ENCODE measurements at regions of chr5 and their contacts with region 1.

Region 1: GRCh38 chr5:38809388-38810359 is 36.1 kb upstream of the OSMR start:
- DNase-seq: peak; percentile 87
- H3K4me3 ChIP-seq: no peak overlapping the region
- H3K27ac ChIP-seq: no peak overlapping the region
- H3K4me1 ChIP-seq: peaks cover 31% of the 10 kb centered on the region
- H3K27me3 ChIP-seq: no peaks in the 10 kb centered on the region
- CTCF ChIP-seq: peak; percentile 81 to 83
- POLR2A ChIP-seq: no peak

Region 2: DNA sequence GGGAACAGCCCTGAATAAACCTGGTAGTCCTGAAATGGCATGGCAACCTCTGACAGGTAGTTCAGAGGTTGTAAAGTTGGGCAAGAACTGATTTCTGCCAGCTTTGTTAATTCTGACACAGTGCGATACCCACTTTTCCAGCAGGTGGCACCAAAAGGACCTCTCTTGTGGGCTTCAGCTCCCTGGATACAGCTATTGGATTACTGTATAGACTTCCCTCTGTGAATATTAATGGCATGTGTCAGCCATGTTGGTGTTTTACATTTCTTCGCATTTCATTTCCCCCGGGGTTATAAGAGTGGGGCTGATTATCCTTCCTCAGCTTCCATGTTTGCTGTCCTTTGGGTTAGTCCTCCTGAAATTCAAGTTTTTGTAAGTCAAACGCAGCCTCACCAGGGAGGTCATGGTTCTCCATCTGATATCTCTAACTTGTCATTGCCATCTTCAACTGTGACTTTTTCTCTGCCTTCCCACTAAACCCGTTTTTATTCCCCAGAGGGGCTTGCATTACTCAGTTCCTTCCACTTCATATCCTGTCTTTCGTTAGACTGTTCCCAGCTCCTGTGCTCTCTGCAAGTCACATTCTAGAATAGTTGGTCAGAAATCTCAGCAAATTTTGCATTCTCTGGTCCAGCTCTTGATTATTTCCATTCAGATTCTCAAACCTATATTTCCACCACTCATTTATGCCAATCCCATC is 388.8 kb before region 1 on chr5:
- CTCF ChIA-PET with region 1: interaction called, 219 read pairs
- POLR2A ChIA-PET with region 1: interaction called, 3 read pairs
- dilution Hi-C with region 1: loop called (anchors 25 kb)
- intact Hi-C with region 1: loop called (anchors 1 kb)
- DNase-seq: peak; percentile 73
- H3K4me3 ChIP-seq: peak overlapping the region in 1 of 3 experiments; percentile 32
- H3K27ac ChIP-seq: peak overlapping the region; percentile 39
- H3K4me1 ChIP-seq: peaks cover 11% of the 10 kb centered on the region
- H3K27me3 ChIP-seq: no peaks in the 10 kb centered on the region
- CTCF ChIP-seq: peak; percentile 74 to 81
- POLR2A ChIP-seq: no peak

Region 3: GRCh38 chr5:38515646-38516045 is 294.0 kb before region 1 on chr5:
- CTCF ChIA-PET with region 1: interaction called, 12 read pairs
- POLR2A ChIA-PET with region 1: no interaction called
- dilution Hi-C with region 1: no loop called
- intact Hi-C with region 1: no loop called
- DNase-seq: peak; percentile 20
- H3K4me3 ChIP-seq: no peak overlapping the region
- H3K27ac ChIP-seq: no peak overlapping the region
- H3K4me1 ChIP-seq: no peaks in the 10 kb centered on the region
- H3K27me3 ChIP-seq: no peaks in the 10 kb centered on the region
- CTCF ChIP-seq: peak in 1 of 2 donors; percentile 46
- POLR2A ChIP-seq: no peak

Region 4: GRCh38 chr5:38598994-38599611 is 210.6 kb before region 1 on chr5:
- CTCF ChIA-PET with region 1: interaction called, 16 read pairs
- POLR2A ChIA-PET with region 1: no interaction called
- dilution Hi-C with region 1: no loop called
- intact Hi-C with region 1: loop called (anchors 2 kb)
- DNase-seq: peak; percentile 87
- H3K4me3 ChIP-seq: no peak overlapping the region
- H3K27ac ChIP-seq: peak overlapping the region; percentile 66
- H3K4me1 ChIP-seq: peaks cover 59% of the 10 kb centered on the region
- H3K27me3 ChIP-seq: no peaks in the 10 kb centered on the region
- CTCF ChIP-seq: no peak
- POLR2A ChIP-seq: no peak

Region 5: GRCh38 chr5:38719916-38720315 is 89.8 kb before region 1 on chr5:
- CTCF ChIA-PET with region 1: interaction called, 7 read pairs
- POLR2A ChIA-PET with region 1: no interaction called
- dilution Hi-C with region 1: no loop called
- intact Hi-C with region 1: loop called (anchors 5 kb)
- DNase-seq: no peak
- H3K4me3 ChIP-seq: no peak overlapping the region
- H3K27ac ChIP-seq: no peak overlapping the region
- H3K4me1 ChIP-seq: no peaks in the 10 kb centered on the region
- H3K27me3 ChIP-seq: peaks cover 0 to 2% of the 10 kb centered on the region in 2 experiments
- CTCF ChIP-seq: no peak
- POLR2A ChIP-seq: no peak

Region 6: GRCh38 chr5:38765399-38765861 is 44.2 kb before region 1 on chr5:
- CTCF ChIA-PET with region 1: no interaction called
- POLR2A ChIA-PET with region 1: no interaction called
- dilution Hi-C with region 1: no loop called
- intact Hi-C with region 1: no loop called
- DNase-seq: no peak
- H3K4me3 ChIP-seq: no peak overlapping the region
- H3K27ac ChIP-seq: no peak overlapping the region
- H3K4me1 ChIP-seq: no peaks in the 10 kb centered on the region
- H3K27me3 ChIP-seq: peaks cover 4 to 5% of the 10 kb centered on the region in 2 experiments
- CTCF ChIP-seq: no peak
- POLR2A ChIP-seq: no peak

Region 7: DNA sequence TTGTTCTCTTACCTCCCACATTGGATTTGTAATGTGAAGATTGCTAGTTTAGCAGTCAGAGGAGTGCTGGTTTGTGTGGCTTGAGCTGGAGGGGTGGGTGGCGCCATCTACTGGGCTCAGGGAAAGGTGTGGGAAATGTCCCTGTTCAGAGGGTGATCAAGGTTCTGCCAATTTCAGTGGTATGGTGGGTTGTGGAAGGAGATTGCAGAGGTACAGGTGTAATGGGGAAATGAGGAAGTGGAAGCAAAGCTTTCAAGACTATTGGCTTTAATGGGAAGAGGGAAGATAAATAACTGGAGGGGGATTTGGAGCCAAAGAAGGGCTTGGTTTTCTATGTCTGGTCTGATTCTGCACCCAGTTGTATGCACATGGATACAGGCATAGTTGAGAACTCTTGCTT is 112.5 kb after region 1 on chr5:
- CTCF ChIA-PET with region 1: interaction called, 23 read pairs
- POLR2A ChIA-PET with region 1: no interaction called
- dilution Hi-C with region 1: no loop called
- intact Hi-C with region 1: loop called (anchors 5 kb)
- DNase-seq: peak; percentile 65
- H3K4me3 ChIP-seq: no peak overlapping the region
- H3K27ac ChIP-seq: no peak overlapping the region
- H3K4me1 ChIP-seq: no peaks in the 10 kb centered on the region
- H3K27me3 ChIP-seq: peaks cover 0 to 3% of the 10 kb centered on the region in 2 experiments
- CTCF ChIP-seq: peak; percentile 87 to 88
- POLR2A ChIP-seq: no peak